B cell (primary cell): ENCODE measurements at regions of chr1 and their contacts with region 1.

Region 1: GRCh38 chr1:99685516-99686180 is 39.7 kb downstream of the PALMD start:
- DNase-seq: peak; percentile 31
- ATAC-seq: peak; percentile 45
- H3K4me3 ChIP-seq: no peak overlapping the region
- H3K4me3 Mint-ChIP-seq: no peak overlapping the region
- H3K27ac ChIP-seq: no peak overlapping the region
- H3K27ac Mint-ChIP-seq: no peak overlapping the region
- H3K4me1 ChIP-seq: no peaks in the 10 kb centered on the region
- H3K4me1 Mint-ChIP-seq: no peaks in the 10 kb centered on the region
- H3K27me3 ChIP-seq: no peaks in the 10 kb centered on the region
- H3K27me3 Mint-ChIP-seq: peaks cover 4% of the 10 kb centered on the region
- CTCF ChIP-seq: peak; percentile 55

Region 2: DNA sequence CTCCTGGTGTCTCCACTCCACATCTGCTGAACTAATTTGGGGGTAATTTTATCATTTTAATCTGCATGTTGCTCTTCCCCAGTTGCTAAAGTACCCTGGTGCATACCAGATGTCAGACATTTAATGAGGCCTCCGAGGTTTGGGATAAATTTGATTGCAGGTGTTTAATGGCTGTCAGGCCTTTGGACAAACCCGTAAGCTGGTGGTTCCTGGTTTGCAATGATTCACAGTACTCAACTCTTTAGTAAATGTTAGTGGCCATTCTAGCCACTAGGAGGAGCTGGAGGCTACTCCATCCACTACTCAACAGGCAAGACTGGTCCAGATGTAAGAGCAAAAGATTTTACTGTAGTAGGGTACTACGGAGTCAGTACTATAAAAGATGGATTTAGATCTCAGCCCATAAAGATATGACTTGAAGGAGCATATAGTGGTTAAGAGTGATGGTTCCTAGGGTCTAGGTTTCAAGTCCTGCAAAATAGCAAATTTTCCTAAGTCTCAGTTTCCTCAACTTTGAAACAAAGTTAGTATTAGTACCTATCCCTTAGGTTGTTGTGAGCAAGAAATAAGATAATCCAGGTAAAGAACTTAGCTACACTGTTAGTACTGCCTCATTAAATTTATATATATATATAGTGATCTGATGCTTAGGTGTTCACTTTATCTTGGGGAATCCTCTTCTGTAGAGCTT is 891.3 kb before region 1 on chr1:
- CTCF ChIA-PET with region 1: no interaction called
- POLR2A ChIA-PET with region 1: no interaction called
- intact Hi-C with region 1: loop called (anchors 5 kb)
- DNase-seq: peak; percentile 69
- ATAC-seq: peak; percentile 62
- H3K4me3 ChIP-seq: no peak overlapping the region
- H3K4me3 Mint-ChIP-seq: no peak overlapping the region
- H3K27ac ChIP-seq: no peak overlapping the region
- H3K27ac Mint-ChIP-seq: no peak overlapping the region
- H3K4me1 ChIP-seq: no peaks in the 10 kb centered on the region
- H3K4me1 Mint-ChIP-seq: peaks cover 2% of the 10 kb centered on the region
- H3K27me3 ChIP-seq: no peaks in the 10 kb centered on the region
- H3K27me3 Mint-ChIP-seq: no peaks in the 10 kb centered on the region
- CTCF ChIP-seq: peak; percentile 74

Region 3: GRCh38 chr1:99696616-99697015 is 11.0 kb after region 1 on chr1:
- CTCF ChIA-PET with region 1: interaction called, 14 read pairs
- POLR2A ChIA-PET with region 1: no interaction called
- intact Hi-C with region 1: no loop called
- DNase-seq: no peak
- ATAC-seq: no peak
- H3K4me3 ChIP-seq: no peak overlapping the region
- H3K4me3 Mint-ChIP-seq: no peak overlapping the region
- H3K27ac ChIP-seq: no peak overlapping the region
- H3K27ac Mint-ChIP-seq: no peak overlapping the region
- H3K4me1 ChIP-seq: no peaks in the 10 kb centered on the region
- H3K4me1 Mint-ChIP-seq: no peaks in the 10 kb centered on the region
- H3K27me3 ChIP-seq: no peaks in the 10 kb centered on the region
- H3K27me3 Mint-ChIP-seq: peaks cover 25% of the 10 kb centered on the region
- CTCF ChIP-seq: no peak